ENCODE measurements at regions of chr13 and their contacts with region 1.

Region 1: DNA sequence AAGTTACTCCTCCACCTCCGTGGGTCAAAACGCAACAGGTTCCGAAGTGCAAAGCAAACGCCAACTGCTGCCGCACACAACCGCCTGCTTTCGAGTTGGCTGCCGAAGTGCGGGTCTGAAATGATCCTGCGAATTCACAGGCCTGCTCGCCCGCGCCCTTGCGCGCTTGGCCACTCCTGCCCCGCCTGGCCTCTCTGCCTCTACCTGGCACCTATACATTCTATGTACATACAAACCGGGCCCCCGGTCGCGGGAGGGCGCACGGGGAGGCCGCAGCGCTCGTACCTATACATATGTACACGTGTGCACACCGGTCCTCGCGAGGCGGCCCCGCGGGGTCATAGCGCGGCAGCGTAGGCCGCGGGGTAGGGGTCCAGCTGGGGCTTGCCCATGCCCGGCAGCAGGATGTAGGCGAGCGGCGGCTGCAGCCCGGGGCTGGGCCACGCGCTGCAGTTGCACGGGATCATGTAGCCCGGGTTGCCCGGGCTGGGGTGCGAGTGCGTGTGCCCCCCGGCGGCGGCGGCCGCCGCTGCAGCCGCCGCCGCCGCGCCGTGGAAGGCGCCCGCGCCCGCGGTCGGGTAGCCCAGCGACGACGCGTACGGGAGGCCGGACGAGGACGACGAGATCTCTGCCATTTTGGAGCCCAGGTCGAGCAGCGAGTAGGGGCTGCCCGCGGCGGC is 1.3 kb downstream of the SOX21 start:
- DNase-seq: no peak
- H3K4me3 Mint-ChIP-seq: peak overlapping the region; percentile 42
- H3K27ac Mint-ChIP-seq: no peak overlapping the region
- H3K4me1 Mint-ChIP-seq: peaks cover 11% of the 10 kb centered on the region
- H3K27me3 Mint-ChIP-seq: peaks cover 79% of the 10 kb centered on the region

Region 2: DNA sequence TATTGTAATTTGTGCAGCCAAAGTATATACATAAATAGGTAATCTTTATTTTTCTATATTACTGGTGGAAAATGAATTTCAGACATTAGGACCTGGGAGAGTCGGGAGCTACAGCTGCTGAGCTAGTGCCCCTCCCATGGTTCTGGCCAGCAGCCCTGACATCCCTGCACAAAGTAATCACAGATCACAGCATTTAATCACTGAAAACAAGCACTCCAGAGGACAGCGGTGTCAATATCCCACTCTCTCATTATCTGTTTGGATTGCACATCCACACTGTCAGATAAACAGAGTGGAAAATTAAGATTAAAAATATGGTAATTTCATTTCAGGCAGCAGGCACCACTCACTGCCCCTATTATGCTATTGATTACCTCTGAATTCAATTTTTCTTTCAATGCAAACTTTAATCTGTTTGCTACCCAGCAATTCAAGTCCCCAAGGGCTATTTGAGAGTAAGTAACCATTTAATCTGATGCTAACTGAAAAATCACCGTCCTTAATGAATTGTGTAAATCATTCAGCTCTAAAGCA is 255.5 kb after region 1 on chr13:
- intact Hi-C with region 1: loop called (anchors 1 kb)
- DNase-seq: no peak
- H3K4me3 Mint-ChIP-seq: no peak overlapping the region
- H3K27ac Mint-ChIP-seq: no peak overlapping the region
- H3K4me1 Mint-ChIP-seq: peaks cover 7% of the 10 kb centered on the region
- H3K27me3 Mint-ChIP-seq: peaks cover 65% of the 10 kb centered on the region

Region 3: DNA sequence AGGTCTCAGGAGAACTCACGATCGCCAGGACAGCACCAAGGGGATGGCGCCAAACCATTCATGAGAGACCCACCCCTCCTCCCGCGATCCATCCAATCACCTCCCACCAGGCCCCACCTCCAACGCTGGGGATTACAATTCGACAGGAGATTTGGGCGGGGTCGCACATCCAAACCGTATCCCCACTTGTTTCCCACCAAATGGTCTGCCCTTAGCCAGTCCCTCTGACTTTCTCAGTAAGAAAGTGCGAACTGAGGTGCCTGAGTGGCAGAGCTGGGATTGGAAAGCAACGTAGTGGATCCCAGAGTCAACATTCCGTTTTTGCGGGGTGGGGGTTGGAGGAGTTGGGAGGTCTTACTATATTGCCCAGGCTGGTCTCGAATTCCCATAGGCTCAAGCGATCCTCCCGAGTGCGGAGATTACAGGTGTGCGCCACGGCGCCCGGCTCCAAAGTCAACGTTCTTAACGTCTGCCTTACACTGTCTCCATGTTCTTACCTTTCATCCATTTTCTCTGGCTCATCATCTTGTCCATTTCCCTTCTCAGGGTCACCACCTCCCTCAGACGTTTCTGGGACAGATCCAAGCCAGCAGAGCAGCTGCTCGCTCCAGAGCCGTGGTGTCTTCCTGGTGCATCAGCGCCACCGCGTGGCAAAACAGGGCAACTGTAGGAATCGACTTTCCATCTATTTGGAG is 693.0 kb after region 1 on chr13:
- intact Hi-C with region 1: loop called (anchors 2 kb)
- DNase-seq: peak; percentile 56
- H3K4me3 Mint-ChIP-seq: peak overlapping the region; percentile 89
- H3K27ac Mint-ChIP-seq: no peak overlapping the region
- H3K4me1 Mint-ChIP-seq: peaks cover 6% of the 10 kb centered on the region
- H3K27me3 Mint-ChIP-seq: peaks cover 6% of the 10 kb centered on the region

Region 4: DNA sequence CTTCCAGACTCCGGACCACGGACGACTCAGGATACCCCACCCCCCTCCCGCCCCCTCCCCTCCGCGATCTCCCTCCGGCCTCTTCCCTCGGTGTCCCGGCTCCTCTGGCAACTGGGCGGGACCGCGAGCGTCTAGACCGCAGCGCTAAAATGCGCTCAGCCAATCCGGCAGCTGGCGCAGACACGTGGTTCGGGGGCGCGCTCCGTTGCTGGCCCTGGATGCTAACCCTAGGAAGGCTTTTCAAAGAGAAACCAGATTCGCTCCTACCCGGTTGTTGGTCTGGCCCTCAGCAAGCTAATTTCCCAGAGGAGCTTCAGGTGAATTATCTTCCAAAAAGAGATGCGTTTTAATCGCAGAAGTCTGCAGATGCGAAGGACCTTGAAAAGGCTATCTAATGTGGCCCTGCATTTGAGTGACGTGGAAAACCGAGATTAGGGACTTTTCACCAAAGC is 933.6 kb after region 1 on chr13 and contains the start of gene DZIP1:
- intact Hi-C with region 1: loop called (anchors 10 kb)
- DNase-seq: no peak
- H3K4me3 Mint-ChIP-seq: peak within 1 kb of the TSS; percentile 64
- H3K27ac Mint-ChIP-seq: no peak within 1 kb of the TSS
- H3K4me1 Mint-ChIP-seq: peaks cover 4% of the 10 kb centered on the region
- H3K27me3 Mint-ChIP-seq: peaks cover 55% of the 10 kb centered on the region
- total RNA-seq, gene DZIP1: 0.48 and 0.64 TPM in 2 replicates